ENCODE measurements at regions of chr14 and their contacts with region 1.

Region 1: DNA sequence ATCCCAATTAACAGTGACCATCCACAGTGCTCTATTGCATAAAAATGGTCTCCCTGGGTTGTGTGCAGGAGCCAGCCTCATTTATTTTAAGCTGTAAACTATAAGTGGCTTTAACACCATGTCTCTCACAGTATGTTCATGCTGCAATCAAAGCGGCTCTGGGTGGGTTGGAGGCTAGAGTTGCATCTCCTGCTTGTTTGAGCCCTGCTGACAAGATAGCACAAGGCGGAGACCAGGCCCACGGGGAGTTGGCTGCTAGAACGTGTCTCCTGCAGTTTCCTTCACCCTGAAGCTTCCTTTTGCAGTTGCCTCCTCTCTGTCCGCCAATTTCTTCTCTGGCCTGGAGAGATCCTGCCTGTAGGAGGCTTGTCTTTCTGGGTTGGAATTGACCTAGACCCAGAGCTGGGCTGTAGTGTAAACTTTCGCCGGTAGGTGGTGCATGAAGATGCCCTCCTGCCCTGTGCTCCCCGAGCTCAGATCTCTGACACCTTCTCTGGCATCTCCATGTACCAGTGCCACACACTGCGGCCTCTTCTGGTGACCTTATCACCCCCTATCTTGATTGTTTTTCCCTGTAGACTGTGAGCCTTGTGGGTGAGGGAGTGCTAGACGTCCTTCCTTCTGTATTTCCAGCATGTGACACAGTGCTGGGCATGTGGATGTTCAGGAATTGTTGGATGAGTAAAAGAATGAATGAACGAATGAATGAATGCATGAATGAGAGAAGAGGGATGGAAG is 10.3 kb downstream of the OTUB2 start:
- DNase-seq: peak; percentile 75 to 88
- ATAC-seq: peak; percentile 72
- H3K4me3 ChIP-seq: no peak overlapping the region
- H3K27ac ChIP-seq: no peak overlapping the region
- H3K4me1 ChIP-seq: no peaks in the 10 kb centered on the region
- H3K27me3 ChIP-seq: no peaks in the 10 kb centered on the region

Region 2: DNA sequence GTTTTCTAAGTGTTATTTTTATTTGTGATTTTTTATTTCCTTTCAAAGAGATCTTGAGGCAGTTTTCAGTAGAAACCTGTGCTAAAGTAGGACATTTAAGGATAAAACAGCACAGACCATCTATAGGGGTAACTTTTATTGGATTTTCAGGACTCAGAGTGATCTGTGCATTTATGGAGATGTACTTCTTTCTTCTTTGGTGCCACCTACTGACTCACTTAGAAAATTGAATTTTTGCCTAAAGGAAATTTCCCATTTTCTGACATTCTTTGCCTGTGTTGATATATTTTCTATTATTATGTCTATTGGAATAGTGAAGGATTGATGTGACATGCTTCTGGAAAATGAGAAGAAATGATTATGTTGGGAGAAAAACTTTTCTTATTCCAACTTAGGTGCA is 492.7 kb before region 1 on chr14:
- intact Hi-C with region 1: no loop called
- DNase-seq: no peak
- ATAC-seq: no peak
- H3K4me3 ChIP-seq: no peak overlapping the region
- H3K27ac ChIP-seq: no peak overlapping the region
- H3K4me1 ChIP-seq: no peaks in the 10 kb centered on the region
- H3K27me3 ChIP-seq: no peaks in the 10 kb centered on the region

Region 3: DNA sequence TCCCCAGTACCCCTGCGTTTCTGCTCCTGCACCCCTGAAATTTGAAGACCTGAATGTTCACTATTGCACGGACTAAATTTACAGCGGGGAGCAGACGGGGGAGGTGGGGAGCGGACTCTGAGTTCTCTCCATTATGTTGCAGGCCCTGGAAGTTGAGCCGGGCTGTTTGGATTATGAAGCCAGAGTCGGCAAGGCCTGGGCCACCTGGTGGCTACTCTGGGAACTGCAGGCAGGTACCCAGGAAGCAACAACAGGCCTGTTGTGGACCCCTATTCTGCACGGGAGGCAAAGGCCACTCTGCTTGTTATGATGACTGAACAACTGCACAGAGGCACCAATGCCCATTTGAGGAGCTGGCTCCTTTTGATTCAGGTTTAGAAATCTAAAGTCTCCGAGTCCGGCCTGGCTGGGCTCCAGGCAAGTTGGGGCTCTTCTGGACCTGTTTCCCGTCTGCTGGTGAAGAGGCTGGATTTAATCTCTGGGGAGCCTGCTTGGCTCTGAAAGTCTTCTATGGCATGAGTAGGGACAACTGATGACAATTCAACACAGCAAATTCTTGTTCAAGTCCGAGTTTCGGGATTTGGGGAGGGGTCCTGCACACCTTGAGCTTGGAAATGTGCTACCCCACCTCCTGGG is 143.4 kb before region 1 on chr14:
- intact Hi-C with region 1: no loop called
- DNase-seq: peak; percentile 74 to 94
- ATAC-seq: peak; percentile 82
- H3K4me3 ChIP-seq: no peak overlapping the region
- H3K27ac ChIP-seq: no peak overlapping the region
- H3K4me1 ChIP-seq: no peaks in the 10 kb centered on the region
- H3K27me3 ChIP-seq: no peaks in the 10 kb centered on the region

Region 4: GRCh38 chr14:94180655-94181271 is 144.3 kb after region 1 on chr14:
- intact Hi-C with region 1: loop called in 1 of 2 experiments (anchors 2 kb)
- DNase-seq: no peak
- ATAC-seq: no peak
- H3K4me3 ChIP-seq: no peak overlapping the region
- H3K27ac ChIP-seq: no peak overlapping the region
- H3K4me1 ChIP-seq: no peaks in the 10 kb centered on the region
- H3K27me3 ChIP-seq: no peaks in the 10 kb centered on the region

Measured in aorta (tissue), 5 donors.